ENCODE measurements at regions of chr17 and their contacts with region 1.

Region 1: GRCh38 chr17:17206124-17206912 is at the start of gene PLD6:
- DNase-seq: peak; percentile 98

Region 2: DNA sequence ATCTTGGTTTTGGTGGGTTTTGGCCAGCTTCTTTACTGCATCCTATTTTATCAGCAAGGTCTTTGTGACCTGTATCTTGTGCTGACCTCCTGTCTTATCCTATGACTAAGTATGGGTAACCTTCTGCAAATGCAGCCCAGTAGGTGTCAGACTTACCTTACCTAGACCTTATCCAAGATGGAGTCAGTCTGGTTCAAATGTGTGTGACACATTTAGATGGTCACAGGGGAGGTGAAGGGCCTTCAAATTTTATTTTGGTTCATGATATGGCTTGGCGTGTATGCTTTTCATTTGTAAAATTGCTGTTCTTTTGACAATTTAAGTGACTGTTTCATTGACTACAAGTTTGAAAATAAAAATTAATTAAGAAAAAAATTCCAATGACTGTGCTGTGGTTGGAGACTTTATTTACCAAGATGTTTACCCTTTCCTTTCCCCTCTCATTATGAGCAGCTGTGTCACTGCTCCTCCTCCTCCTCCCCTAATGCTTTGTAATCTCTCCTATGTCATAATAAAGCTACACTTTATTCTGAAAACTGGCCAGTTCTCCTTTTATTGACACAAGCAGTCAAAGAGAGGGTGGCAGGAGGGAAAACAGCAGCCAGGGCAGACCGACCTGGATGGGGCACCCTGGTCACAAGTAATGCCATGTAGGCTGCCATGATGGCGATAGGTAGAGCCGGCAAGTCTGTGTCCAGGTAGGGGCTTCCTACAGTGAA is 283.8 kb before region 1 on chr17:
- in situ Hi-C with region 1: no loop called
- DNase-seq: no peak

Region 3: DNA sequence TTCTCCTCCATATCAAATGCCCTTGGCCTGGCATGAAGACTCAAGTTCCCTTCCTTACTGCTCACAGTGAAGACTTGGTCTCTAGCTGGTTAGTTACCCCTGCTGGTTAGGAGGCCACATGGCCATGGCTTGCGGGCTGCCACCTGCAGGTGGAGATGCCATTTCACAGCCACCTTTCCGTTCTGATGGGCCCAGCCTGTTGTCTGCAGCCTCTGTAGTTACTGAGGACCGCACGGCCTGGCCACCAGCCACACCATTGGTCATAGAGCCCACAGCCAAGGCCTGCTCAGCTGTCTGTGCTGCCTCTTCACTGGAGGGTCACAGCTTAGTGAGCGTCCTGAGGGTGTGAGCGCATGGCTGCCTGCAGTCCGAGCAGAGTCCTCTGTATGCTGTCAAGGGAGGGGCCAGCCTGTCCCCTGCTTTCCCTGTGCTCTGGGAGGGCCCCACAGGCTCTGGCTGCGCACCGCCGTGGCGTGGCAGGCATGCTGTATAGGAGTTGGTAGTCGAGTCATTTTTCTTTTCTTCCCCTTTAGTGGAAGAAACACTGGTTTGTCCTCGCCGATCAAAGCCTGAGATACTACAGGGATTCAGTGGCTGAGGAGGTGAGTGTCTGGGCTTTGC is 59.4 kb before region 1 on chr17:
- in situ Hi-C with region 1: loop called (anchors 5 kb)
- DNase-seq: peak; percentile 54

Measured in KBM-7 (cell line).